Mammary epithelial cell (primary cell): ENCODE measurements at regions of chr13 and their contacts with region 1.

Region 1: DNA sequence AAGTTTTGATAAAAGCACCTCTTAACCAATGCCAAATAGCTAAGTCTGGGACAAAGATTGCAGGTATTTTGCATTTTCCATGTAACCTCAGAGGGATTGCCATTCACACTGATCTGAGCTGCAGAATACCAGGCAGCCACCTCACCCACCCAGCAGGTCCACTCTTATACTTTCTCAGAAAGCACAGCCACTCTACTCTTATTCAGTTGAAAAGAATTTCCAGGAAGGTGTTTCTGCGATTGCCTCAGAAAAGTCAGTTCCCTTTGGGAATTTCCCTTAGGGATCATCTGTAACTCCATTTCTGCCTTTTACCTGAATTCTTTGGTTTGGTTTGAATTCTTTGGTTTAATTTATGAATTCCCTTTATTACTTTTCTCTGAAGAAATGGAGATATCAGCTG is 907 bp upstream of the ALOX5AP start:
- DNase-seq: peak; percentile 82
- H3K4me3 ChIP-seq: no peak overlapping the region
- H3K27ac ChIP-seq: peak overlapping the region; percentile 37
- H3K4me1 ChIP-seq: peaks cover 23% of the 10 kb centered on the region
- H3K27me3 ChIP-seq: no peaks in the 10 kb centered on the region
- CTCF ChIP-seq: no peak

Region 2: GRCh38 chr13:30718661-30719524 is 15.5 kb before region 1 on chr13:
- CTCF ChIA-PET with region 1: no interaction called
- dilution Hi-C with region 1: no loop called
- in situ Hi-C with region 1: no loop called
- intact Hi-C with region 1: loop called (anchors 1 kb)
- DNase-seq: peak; percentile 85
- H3K4me3 ChIP-seq: no peak overlapping the region
- H3K27ac ChIP-seq: peak overlapping the region; percentile 44
- H3K4me1 ChIP-seq: peaks cover 19% of the 10 kb centered on the region
- H3K27me3 ChIP-seq: no peaks in the 10 kb centered on the region
- CTCF ChIP-seq: no peak

Region 3: GRCh38 chr13:30957258-30957943 is 223.0 kb after region 1 on chr13:
- CTCF ChIA-PET with region 1: no interaction called
- dilution Hi-C with region 1: no loop called
- in situ Hi-C with region 1: no loop called
- intact Hi-C with region 1: no loop called
- DNase-seq: no peak
- H3K4me3 ChIP-seq: no peak overlapping the region
- H3K27ac ChIP-seq: no peak overlapping the region
- H3K4me1 ChIP-seq: no peaks in the 10 kb centered on the region
- H3K27me3 ChIP-seq: no peaks in the 10 kb centered on the region
- CTCF ChIP-seq: no peak